ENCODE measurements at regions of chr3 and their contacts with region 1.

Region 1: GRCh38 chr3:14203521-14204079 is 25.0 kb downstream of the LSM3 start:
- DNase-seq: peak; percentile 62 to 63
- H3K4me3 ChIP-seq: no peak overlapping the region
- H3K27ac ChIP-seq: no peak overlapping the region
- H3K4me1 ChIP-seq: peaks cover 39% of the 10 kb centered on the region
- H3K27me3 ChIP-seq: no peaks in the 10 kb centered on the region
- CTCF ChIP-seq: peak; percentile 96

Region 2: GRCh38 chr3:13895155-13896105 is 308.2 kb before region 1 on chr3:
- CTCF ChIA-PET with region 1: interaction called, 5 read pairs
- POLR2A ChIA-PET with region 1: no interaction called
- intact Hi-C with region 1: loop called (anchors 1 kb)
- DNase-seq: peak; percentile 75 to 95
- H3K4me3 ChIP-seq: peak overlapping the region; percentile 96
- H3K27ac ChIP-seq: no peak overlapping the region
- H3K4me1 ChIP-seq: peaks cover 17% of the 10 kb centered on the region
- H3K27me3 ChIP-seq: no peaks in the 10 kb centered on the region
- CTCF ChIP-seq: no peak

Region 3: DNA sequence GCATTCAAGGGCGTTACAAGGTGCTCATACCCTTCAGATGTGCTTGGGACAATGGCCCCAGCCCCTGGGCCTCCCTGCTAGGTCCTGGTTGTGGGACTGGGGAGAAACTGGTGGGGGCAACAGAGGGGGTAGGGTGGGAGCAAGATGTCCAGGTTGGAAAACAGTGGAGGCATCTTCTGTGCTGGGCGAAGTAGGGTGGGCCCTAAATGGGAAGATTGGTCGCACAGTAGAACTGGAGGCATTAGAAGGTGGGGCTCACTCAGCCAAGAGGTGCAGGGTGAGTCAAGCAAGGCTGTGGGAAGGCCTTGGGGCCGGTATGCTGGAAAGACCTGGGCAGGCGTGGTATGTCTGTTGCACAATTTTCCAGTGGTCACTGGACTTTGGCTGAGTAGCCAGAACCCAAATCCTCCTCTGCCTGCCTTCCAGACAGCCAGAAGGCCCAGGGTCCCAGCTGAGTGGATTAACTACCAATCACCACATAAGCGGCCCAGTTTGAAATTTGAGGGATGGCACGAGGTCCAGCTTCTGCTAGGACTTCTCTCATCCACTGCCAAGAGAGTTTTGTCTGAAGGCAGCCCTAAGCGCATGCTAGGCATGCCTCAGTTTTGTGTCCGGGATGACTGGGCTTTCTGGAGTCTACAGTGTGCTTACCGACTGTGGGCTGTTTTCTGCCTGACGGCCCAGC is 49.6 kb after region 1 on chr3:
- CTCF ChIA-PET with region 1: interaction called, 40 read pairs
- POLR2A ChIA-PET with region 1: no interaction called
- intact Hi-C with region 1: loop called (anchors 1 kb)
- DNase-seq: peak; percentile 62 to 73
- H3K4me3 ChIP-seq: no peak overlapping the region
- H3K27ac ChIP-seq: no peak overlapping the region
- H3K4me1 ChIP-seq: peaks cover 37% of the 10 kb centered on the region
- H3K27me3 ChIP-seq: no peaks in the 10 kb centered on the region
- CTCF ChIP-seq: no peak

Region 4: GRCh38 chr3:14402304-14402811 is 198.8 kb after region 1 on chr3 and contains the start of gene SLC6A6:
- CTCF ChIA-PET with region 1: interaction called, 8 read pairs
- POLR2A ChIA-PET with region 1: no interaction called
- intact Hi-C with region 1: loop called (anchors 10 kb)
- DNase-seq: peak; percentile 82 to 97
- H3K4me3 ChIP-seq: peak within 1 kb of the TSS; percentile 88
- H3K27ac ChIP-seq: peak within 1 kb of the TSS; percentile 99
- H3K4me1 ChIP-seq: peaks cover 39% of the 10 kb centered on the region
- H3K27me3 ChIP-seq: no peaks in the 10 kb centered on the region
- CTCF ChIP-seq: peak; percentile 57
- total RNA-seq, gene SLC6A6: 84.9 and 122 TPM in 2 replicates

Region 5: GRCh38 chr3:14508961-14509795 is 305.6 kb after region 1 on chr3:
- CTCF ChIA-PET with region 1: interaction called, 6 read pairs
- POLR2A ChIA-PET with region 1: no interaction called
- intact Hi-C with region 1: loop called (anchors 5 kb)
- DNase-seq: peak; percentile 44 to 68
- H3K4me3 ChIP-seq: no peak overlapping the region
- H3K27ac ChIP-seq: no peak overlapping the region
- H3K4me1 ChIP-seq: 0 out of 2 replicates have a peak, but pooled peaks cover 5% of the 10 kb centered on the region
- H3K27me3 ChIP-seq: 0 out of 2 replicates have a peak, but pooled peaks cover 5% of the 10 kb centered on the region
- CTCF ChIP-seq: peak; percentile 96

Region 6: GRCh38 chr3:14780927-14781507 is 577.4 kb after region 1 on chr3:
- CTCF ChIA-PET with region 1: interaction called, 3 read pairs
- POLR2A ChIA-PET with region 1: no interaction called
- intact Hi-C with region 1: loop called (anchors 5 kb)
- DNase-seq: peak; percentile 38 to 43
- H3K4me3 ChIP-seq: no peak overlapping the region
- H3K27ac ChIP-seq: no peak overlapping the region
- H3K4me1 ChIP-seq: no peaks in the 10 kb centered on the region
- H3K27me3 ChIP-seq: peaks cover 4% of the 10 kb centered on the region; the same call in 1 of the 2 replicates
- CTCF ChIP-seq: peak; percentile 83